Activated T-helper 2 cell treated with anti-CD3 and anti-CD28 coated beads, Interferon-gamma antibody, Interleukin-2, Interleukin-4, amounts not matched to agents 10 μg/mL and 5 μg/mL and 100 μg/mL, durations not matched to agents 14 hours and 24 hours and 36 hours (primary cell): ENCODE measurements at regions of chr4 and their contacts with region 1.

Region 1: GRCh38 chr4:109815151-109816081 is at the start of gene GAR1:
- DNase-seq: peak; percentile 89
- H3K4me3 Mint-ChIP-seq: peak within 1 kb of the TSS; percentile 100
- H3K27ac Mint-ChIP-seq: peak within 1 kb of the TSS; percentile 98
- H3K4me1 Mint-ChIP-seq: peaks cover 43% of the 10 kb centered on the region
- H3K27me3 Mint-ChIP-seq: no peaks in the 10 kb centered on the region
- total RNA-seq, gene GAR1: 43.6 and 44.8 TPM in 2 replicates

Region 2: GRCh38 chr4:108650212-108651013 is 1165.0 kb before region 1 on chr4 and contains the start of gene OSTC:
- intact Hi-C with region 1: loop called (anchors 1 kb)
- DNase-seq: peak; percentile 90
- H3K4me3 Mint-ChIP-seq: peak within 1 kb of the TSS; percentile 97
- H3K27ac Mint-ChIP-seq: peak within 1 kb of the TSS; percentile 92
- H3K4me1 Mint-ChIP-seq: peaks cover 21% of the 10 kb centered on the region
- H3K27me3 Mint-ChIP-seq: no peaks in the 10 kb centered on the region
- total RNA-seq, gene OSTC: 113 and 115 TPM in 2 replicates

Region 3: DNA sequence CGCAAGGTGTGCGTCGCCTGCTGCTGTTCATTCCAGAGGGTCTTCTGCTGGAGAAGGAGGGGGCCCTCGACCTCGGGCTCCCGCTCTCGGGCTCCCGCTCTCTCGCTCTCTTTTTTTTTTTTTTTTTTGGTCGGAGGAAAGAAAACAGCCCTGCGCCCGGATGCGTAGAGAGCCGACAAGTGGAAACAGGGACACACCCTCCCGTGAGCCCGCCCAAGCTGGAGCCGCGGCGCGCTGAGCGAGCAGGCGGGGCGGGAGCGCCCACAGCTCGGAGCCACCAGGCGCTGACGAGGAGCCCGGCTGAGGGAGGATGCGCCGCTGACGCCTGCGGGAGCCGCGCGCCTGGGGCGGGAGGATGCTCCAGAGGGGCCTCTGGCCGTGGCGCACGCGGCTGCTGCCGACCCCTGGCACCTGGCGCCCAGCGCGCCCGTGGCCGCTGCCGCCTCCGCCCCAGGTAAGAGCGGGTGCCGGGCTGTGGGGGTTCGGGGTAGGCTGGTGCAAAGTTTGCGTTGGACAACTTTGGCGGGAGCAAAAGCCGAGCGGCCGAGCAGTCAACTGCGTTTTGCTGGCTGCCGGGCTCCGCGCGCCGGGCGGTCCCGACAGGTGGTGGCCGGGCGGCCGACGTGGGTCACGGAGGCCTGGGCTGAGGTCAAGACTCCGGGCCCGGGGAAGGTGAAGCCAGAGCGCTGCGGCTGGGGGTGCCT is 255.3 kb before region 1 on chr4 and contains the start of gene MCUB:
- intact Hi-C with region 1: loop called (anchors 2 kb)
- DNase-seq: peak; percentile 93
- H3K4me3 Mint-ChIP-seq: peak within 1 kb of the TSS; percentile 84
- H3K27ac Mint-ChIP-seq: peak within 1 kb of the TSS; percentile 93
- H3K4me1 Mint-ChIP-seq: peaks cover 33% of the 10 kb centered on the region
- H3K27me3 Mint-ChIP-seq: no peaks in the 10 kb centered on the region
- total RNA-seq, gene MCUB: 30.1 and 37.1 TPM in 2 replicates

Region 4: GRCh38 chr4:109702950-109703663 is 112.3 kb before region 1 on chr4 and contains the start of gene CASP6:
- intact Hi-C with region 1: loop called (anchors 1 kb)
- DNase-seq: peak; percentile 73
- H3K4me3 Mint-ChIP-seq: peak within 1 kb of the TSS; percentile 85
- H3K27ac Mint-ChIP-seq: peak within 1 kb of the TSS; percentile 85
- H3K4me1 Mint-ChIP-seq: peaks cover 35% of the 10 kb centered on the region
- H3K27me3 Mint-ChIP-seq: no peaks in the 10 kb centered on the region
- total RNA-seq, gene CASP6: 26.7 and 31.8 TPM in 2 replicates

Region 5: DNA sequence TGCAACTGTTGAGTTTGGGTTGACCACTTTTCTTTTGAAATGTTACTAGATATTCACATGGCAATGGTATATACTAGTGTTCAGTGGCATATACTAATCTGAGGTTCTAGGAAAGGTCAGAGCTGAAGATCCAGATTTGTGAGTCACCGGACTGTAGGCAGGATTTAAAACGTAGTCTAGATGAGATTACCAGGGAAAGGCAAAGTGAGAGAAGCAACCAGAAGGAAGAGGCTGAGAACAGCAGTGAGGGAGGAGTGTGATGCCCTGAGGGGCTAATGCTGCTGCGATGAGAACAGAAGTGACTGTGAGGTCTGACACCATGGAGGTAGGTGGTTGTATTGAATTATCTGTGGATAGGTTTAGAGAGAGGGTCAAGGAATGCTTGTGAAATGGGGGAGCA is 75.8 kb before region 1 on chr4:
- intact Hi-C with region 1: no loop called
- DNase-seq: no peak
- H3K4me3 Mint-ChIP-seq: no peak overlapping the region
- H3K27ac Mint-ChIP-seq: no peak overlapping the region
- H3K4me1 Mint-ChIP-seq: no peaks in the 10 kb centered on the region
- H3K27me3 Mint-ChIP-seq: peaks cover 27% of the 10 kb centered on the region

Region 6: DNA sequence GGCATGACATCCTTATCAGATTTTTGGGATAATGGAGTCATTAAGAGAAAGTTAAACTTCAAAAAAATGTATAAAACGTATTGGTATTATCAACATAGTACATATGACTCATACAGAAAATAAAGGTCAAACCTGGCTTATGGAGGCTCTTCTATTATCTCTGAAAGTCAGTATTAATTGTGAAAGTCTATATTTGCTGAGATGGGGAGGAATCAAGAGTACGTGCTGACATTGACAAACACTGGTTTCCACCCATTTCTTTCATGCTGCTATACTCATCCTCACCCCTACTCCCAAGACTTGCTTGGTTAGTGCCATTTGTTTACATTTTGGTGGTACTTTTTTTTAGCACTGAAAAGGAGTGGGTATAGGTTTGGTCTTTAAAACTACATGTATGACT is 54.7 kb before region 1 on chr4:
- intact Hi-C with region 1: loop called (anchors 2 kb)
- DNase-seq: no peak
- H3K4me3 Mint-ChIP-seq: no peak overlapping the region
- H3K27ac Mint-ChIP-seq: no peak overlapping the region
- H3K4me1 Mint-ChIP-seq: peaks cover 10% of the 10 kb centered on the region
- H3K27me3 Mint-ChIP-seq: peaks cover 4% of the 10 kb centered on the region